Activated CD8-positive, alpha-beta memory T cell treated with anti-CD3 and anti-CD28 coated beads, Interleukin-2, amount 10 ng/mL, durations not matched to agents 7 days and 5 days (primary cell): ENCODE measurements at regions of chr12 and their contacts with region 1.

Region 1: GRCh38 chr12:108664338-108665258 is 30.9 kb upstream of the SELPLG start:
- DNase-seq: peak; percentile 93
- ATAC-seq: peak; percentile 100
- H3K4me3 Mint-ChIP-seq: no peak overlapping the region
- H3K27ac Mint-ChIP-seq: peak overlapping the region; percentile 82
- H3K4me1 Mint-ChIP-seq: peaks cover 19% of the 10 kb centered on the region
- H3K27me3 Mint-ChIP-seq: no peaks in the 10 kb centered on the region

Region 2: GRCh38 chr12:108190529-108190928 is 474.1 kb before region 1 on chr12:
- CTCF ChIA-PET with region 1: no interaction called
- DNase-seq: no peak
- ATAC-seq: no peak
- H3K4me3 Mint-ChIP-seq: no peak overlapping the region
- H3K27ac Mint-ChIP-seq: no peak overlapping the region
- H3K4me1 Mint-ChIP-seq: no peaks in the 10 kb centered on the region
- H3K27me3 Mint-ChIP-seq: peaks cover 1% of the 10 kb centered on the region

Region 3: DNA sequence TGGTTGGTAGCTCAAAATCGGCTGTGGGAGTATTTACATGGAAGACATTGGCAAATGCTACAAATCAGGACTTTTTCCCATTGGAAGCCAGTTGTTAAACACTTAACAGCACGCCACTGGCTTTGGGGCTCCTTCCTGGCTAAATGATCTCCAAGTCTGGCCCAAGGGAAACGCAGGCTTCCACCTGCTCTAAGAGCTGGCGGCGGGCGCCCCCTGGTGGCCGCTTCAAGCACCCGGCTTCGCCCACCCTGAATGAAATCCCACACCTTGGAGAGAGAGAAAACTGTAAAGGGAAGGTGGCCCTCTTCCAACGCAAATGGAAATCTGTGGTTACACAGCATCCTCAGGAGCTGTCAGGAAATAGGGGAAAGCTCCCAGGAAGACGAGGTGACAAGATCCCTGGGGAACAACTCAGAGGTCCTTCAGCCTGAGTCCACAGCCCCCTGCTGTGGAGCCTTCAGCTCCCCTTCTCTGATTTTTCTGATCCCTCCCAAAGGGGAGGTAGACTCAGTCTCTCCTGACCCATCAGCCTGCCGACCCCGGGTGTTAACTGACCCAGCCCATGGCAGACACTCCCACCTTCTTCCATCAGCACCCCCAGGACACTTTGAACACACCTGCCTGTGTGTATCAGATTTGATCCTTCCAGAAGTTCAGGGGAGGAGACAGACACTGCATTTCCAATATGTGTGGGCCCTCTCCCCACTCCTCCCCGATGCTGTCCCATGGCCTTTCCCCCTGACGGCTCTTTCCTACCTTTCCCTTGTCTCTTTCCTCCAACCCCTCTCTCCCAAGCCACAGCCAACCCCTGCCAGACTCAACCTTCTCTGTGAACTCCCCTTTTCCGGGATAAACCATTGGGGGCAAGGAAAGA is 46.3 kb before region 1 on chr12:
- CTCF ChIA-PET with region 1: interaction called, 12 read pairs
- DNase-seq: peak; percentile 83
- ATAC-seq: peak; percentile 65
- H3K4me3 Mint-ChIP-seq: no peak overlapping the region
- H3K27ac Mint-ChIP-seq: peak overlapping the region; percentile 73
- H3K4me1 Mint-ChIP-seq: peaks cover 51% of the 10 kb centered on the region
- H3K27me3 Mint-ChIP-seq: no peaks in the 10 kb centered on the region

Region 4: DNA sequence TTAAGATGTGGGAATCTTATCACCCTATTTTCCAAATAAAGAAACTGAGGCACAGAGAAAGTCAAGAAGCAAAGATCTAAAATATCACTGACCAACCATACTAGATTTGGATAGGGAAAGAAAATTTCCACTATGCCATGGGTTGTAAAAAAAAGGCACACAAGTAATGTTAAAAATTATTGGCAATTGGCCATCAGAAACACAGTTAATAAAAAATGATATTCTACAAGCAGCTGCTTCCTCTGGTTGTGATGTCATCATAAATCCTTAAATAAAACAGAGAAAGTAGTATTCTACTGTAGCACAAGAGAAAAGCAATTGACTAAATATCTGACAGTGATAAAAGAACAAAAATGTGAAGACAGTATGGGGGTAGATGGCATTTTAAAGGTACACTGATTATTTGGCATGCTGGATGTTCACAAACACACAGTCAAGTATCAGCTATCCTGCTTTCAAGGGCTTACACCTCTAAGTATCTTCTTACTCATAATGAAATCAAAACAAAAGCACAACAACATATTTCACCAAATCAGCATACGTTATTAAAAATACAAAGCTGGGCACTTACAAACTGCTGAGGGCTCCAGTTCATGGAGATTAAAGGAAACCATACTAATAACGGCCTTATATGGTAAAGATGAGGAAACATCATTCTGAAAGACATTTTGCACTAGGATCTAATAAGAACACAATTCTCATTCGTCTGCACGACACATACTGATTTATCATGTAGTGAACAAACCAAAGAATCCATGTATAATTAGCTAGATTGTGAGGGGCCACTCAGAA is 21.1 kb after region 1 on chr12:
- CTCF ChIA-PET with region 1: interaction called, 27 read pairs
- DNase-seq: no peak
- ATAC-seq: peak; percentile 21
- H3K4me3 Mint-ChIP-seq: no peak overlapping the region
- H3K27ac Mint-ChIP-seq: no peak overlapping the region
- H3K4me1 Mint-ChIP-seq: peaks cover 46% of the 10 kb centered on the region
- H3K27me3 Mint-ChIP-seq: no peaks in the 10 kb centered on the region

Region 5: DNA sequence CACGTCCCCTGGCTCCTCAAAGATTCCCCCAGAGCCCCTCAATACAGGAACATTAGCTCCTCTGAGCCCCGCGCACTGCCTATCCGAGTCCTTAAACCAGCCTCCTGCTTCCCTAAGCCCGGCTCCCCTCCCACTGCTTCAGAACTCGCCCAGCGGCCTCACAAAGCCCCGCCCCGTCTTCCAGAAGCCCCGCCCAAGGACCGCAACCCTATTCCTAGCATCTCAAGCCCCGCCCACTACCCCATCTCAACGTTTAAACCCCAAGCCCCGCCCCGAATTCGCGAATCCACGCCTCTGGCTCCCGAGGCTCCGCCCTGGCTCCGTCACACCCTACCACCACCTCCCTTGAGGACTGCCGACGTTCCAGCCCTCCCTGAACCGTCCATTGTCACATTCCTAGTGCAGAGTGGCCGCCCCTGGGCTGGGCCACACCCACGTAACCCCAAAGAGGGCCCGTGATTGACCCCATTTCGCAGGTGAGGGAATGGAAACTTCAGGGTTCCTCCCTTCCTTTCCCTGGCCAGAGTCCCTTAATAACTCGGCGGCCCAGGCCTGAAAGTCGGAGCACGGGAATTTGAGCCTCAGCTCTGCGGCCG is 67.4 kb after region 1 on chr12:
- CTCF ChIA-PET with region 1: interaction called, 11 read pairs
- DNase-seq: peak; percentile 98
- ATAC-seq: peak; percentile 75
- H3K4me3 Mint-ChIP-seq: peak overlapping the region; percentile 95
- H3K27ac Mint-ChIP-seq: peak overlapping the region; percentile 96
- H3K4me1 Mint-ChIP-seq: peaks cover 44% of the 10 kb centered on the region
- H3K27me3 Mint-ChIP-seq: peaks cover 5% of the 10 kb centered on the region

Region 6: DNA sequence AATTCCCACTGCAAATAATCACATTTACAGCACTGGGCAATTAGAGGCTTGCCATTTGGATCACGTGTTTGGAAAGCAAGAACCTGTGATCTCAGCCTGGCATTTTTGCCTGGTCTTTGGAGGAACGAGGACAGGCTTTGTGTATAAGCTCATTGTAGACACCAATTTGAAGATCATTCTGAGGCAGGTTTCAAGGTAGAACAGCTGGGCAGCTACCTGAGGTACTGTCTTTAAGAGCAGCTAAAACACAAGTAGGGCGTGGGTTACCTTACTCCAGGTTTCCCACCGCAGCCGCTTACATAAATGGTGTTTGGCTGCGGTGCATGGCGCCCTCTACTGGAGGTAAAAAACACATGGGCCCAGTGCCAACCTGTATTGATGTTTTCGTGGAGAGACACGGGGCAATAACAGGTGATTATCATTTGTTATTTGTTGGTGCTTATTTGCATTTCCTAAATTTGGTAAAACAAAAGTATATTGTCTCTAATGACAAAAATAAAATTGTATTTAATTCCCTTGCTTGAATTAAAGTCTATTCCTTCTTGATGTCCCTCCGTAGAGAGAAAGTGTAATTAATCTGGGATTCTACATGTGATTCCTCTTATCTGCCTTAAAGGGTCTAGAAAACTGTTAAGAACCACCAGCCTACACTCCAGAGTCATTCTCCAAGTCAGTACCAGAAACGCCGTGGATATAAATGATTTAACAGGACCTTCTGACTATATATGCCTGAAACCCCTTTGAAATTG is 286.6 kb after region 1 on chr12:
- CTCF ChIA-PET with region 1: interaction called, 27 read pairs
- DNase-seq: peak; percentile 79
- ATAC-seq: peak; percentile 93
- H3K4me3 Mint-ChIP-seq: no peak overlapping the region
- H3K27ac Mint-ChIP-seq: no peak overlapping the region
- H3K4me1 Mint-ChIP-seq: peaks cover 11% of the 10 kb centered on the region
- H3K27me3 Mint-ChIP-seq: peaks cover 17% of the 10 kb centered on the region